ENCODE measurements at regions of chr7 and their contacts with region 1.

Region 1: GRCh38 chr7:43582503-43583423 is at the start of gene STK17A:
- DNase-seq: peak; percentile 92 to 99 (median 96)
- H3K4me3 ChIP-seq: peak within 1 kb of the TSS; percentile 73 to 97
- H3K4me3 Mint-ChIP-seq: peak within 1 kb of the TSS; percentile 93 to 99 (median 98)
- H3K27ac ChIP-seq: peak within 1 kb of the TSS; percentile 87
- H3K27ac Mint-ChIP-seq: peak within 1 kb of the TSS; percentile 93 to 100 (median 98)
- H3K4me1 ChIP-seq: peaks cover 19% of the 10 kb centered on the region
- H3K4me1 Mint-ChIP-seq: peaks cover 13 to 47% (median 18%) of the 10 kb centered on the region in 4 donors
- H3K27me3 ChIP-seq: no peaks in the 10 kb centered on the region
- H3K27me3 Mint-ChIP-seq: peaks cover 2 to 9% of the 10 kb centered on the region in 2 donors
- total RNA-seq, gene STK17A: 118 to 119 TPM

Region 2: GRCh38 chr7:43602271-43602670 is 19.5 kb after region 1 on chr7:
- CTCF ChIA-PET with region 1: interaction called, 25 read pairs
- POLR2A ChIA-PET with region 1: interaction called, 16 read pairs
- intact Hi-C with region 1: loop called (anchors 2 kb)
- DNase-seq: no peak
- H3K4me3 ChIP-seq: no peak overlapping the region
- H3K4me3 Mint-ChIP-seq: no peak overlapping the region
- H3K27ac ChIP-seq: no peak overlapping the region
- H3K27ac Mint-ChIP-seq: no peak overlapping the region
- H3K4me1 ChIP-seq: peaks cover 80% of the 10 kb centered on the region
- H3K4me1 Mint-ChIP-seq: peaks cover 21 to 50% (median 34%) of the 10 kb centered on the region in 4 donors
- H3K27me3 ChIP-seq: no peaks in the 10 kb centered on the region
- H3K27me3 Mint-ChIP-seq: no peaks in the 10 kb centered on the region

Region 3: GRCh38 chr7:43630482-43630881 is 47.7 kb after region 1 on chr7:
- CTCF ChIA-PET with region 1: interaction called, 38 read pairs
- POLR2A ChIA-PET with region 1: interaction called, 17 read pairs
- intact Hi-C with region 1: loop called (anchors 2 kb)
- DNase-seq: no peak
- H3K4me3 ChIP-seq: no peak overlapping the region
- H3K4me3 Mint-ChIP-seq: peak overlapping the region in 4 of 8 donors; percentile 4 to 54 (median 20)
- H3K27ac ChIP-seq: no peak overlapping the region
- H3K27ac Mint-ChIP-seq: peak overlapping the region; percentile 64 to 95 (median 82)
- H3K4me1 ChIP-seq: peaks cover 93% of the 10 kb centered on the region
- H3K4me1 Mint-ChIP-seq: peaks cover 46 to 94% (median 67%) of the 10 kb centered on the region in 4 donors
- H3K27me3 ChIP-seq: no peaks in the 10 kb centered on the region
- H3K27me3 Mint-ChIP-seq: no peaks in the 10 kb centered on the region

Region 4: GRCh38 chr7:43679210-43680068 is 96.7 kb after region 1 on chr7:
- CTCF ChIA-PET with region 1: interaction called, 58 read pairs
- POLR2A ChIA-PET with region 1: interaction called, 7 read pairs
- intact Hi-C with region 1: no loop called
- DNase-seq: no peak
- H3K4me3 ChIP-seq: no peak overlapping the region
- H3K4me3 Mint-ChIP-seq: peak overlapping the region in 7 of 8 donors; percentile 5 to 71 (median 65)
- H3K27ac ChIP-seq: no peak overlapping the region
- H3K27ac Mint-ChIP-seq: peak overlapping the region; percentile 48 to 84 (median 73)
- H3K4me1 ChIP-seq: peaks cover 56% of the 10 kb centered on the region
- H3K4me1 Mint-ChIP-seq: peaks cover 58 to 83% (median 64%) of the 10 kb centered on the region in 4 donors
- H3K27me3 ChIP-seq: no peaks in the 10 kb centered on the region
- H3K27me3 Mint-ChIP-seq: no peaks in the 10 kb centered on the region

Region 5: DNA sequence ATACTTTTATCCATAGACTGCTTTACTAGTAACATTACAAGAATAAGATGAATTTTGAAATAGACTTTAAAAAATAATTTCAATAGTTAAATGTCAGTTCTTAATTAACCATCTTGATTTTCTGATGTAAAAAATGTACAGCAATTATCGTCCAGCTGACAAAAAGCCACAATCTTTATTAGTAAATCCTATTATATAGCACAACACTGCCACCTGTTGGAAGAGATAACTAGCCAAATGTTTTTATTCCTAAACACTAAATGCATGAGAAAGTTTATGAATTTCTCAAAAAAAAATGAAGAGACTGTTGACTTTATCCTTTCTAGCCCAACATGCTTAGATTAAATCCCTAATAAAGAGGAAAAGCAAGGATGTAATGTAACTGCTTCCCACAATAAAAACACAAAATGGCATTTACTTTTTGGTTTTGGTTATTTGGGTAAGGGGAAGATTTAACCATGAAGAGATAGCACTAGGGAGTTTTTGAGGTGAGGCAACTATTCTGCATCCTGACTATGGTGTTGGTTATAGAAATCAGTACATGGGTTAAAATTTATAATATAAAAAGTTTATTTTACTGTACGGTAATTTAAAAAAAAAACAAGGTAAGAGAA is 138.5 kb after region 1 on chr7:
- CTCF ChIA-PET with region 1: interaction called, 140 read pairs
- POLR2A ChIA-PET with region 1: interaction called, 18 read pairs
- intact Hi-C with region 1: loop called (anchors 1 kb)
- DNase-seq: peak in 4 of 5 donors; percentile 54 to 59 (median 58)
- H3K4me3 ChIP-seq: no peak overlapping the region
- H3K4me3 Mint-ChIP-seq: no peak overlapping the region
- H3K27ac ChIP-seq: no peak overlapping the region
- H3K27ac Mint-ChIP-seq: peak overlapping the region in 3 of 7 donors; percentile 14 to 71 (median 47)
- H3K4me1 ChIP-seq: no peaks in the 10 kb centered on the region
- H3K4me1 Mint-ChIP-seq: peaks cover 23 to 46% (median 34%) of the 10 kb centered on the region in 4 donors
- H3K27me3 ChIP-seq: no peaks in the 10 kb centered on the region
- H3K27me3 Mint-ChIP-seq: no peaks in the 10 kb centered on the region

Region 6: GRCh38 chr7:43799589-43799988 is 216.8 kb after region 1 on chr7:
- CTCF ChIA-PET with region 1: interaction called, 21 read pairs
- POLR2A ChIA-PET with region 1: interaction called, 6 read pairs
- intact Hi-C with region 1: no loop called
- DNase-seq: no peak
- H3K4me3 ChIP-seq: no peak overlapping the region
- H3K4me3 Mint-ChIP-seq: no peak overlapping the region
- H3K27ac ChIP-seq: no peak overlapping the region
- H3K27ac Mint-ChIP-seq: no peak overlapping the region
- H3K4me1 ChIP-seq: no peaks in the 10 kb centered on the region
- H3K4me1 Mint-ChIP-seq: no peaks in the 10 kb centered on the region
- H3K27me3 ChIP-seq: no peaks in the 10 kb centered on the region
- H3K27me3 Mint-ChIP-seq: no peaks in the 10 kb centered on the region

Measured in CD4-positive, alpha-beta memory T cell (primary cell).